CD4-positive, alpha-beta T cell (primary cell): ENCODE measurements at regions of chr7 and their contacts with region 1.

Region 1: GRCh38 chr7:97117372-97118188 is at the start of gene SDHAF3:
- DNase-seq: peak; percentile 96 to 99 (median 98)
- ATAC-seq: peak; percentile 93
- H3K4me3 ChIP-seq: peak within 1 kb of the TSS; percentile 82
- H3K4me3 Mint-ChIP-seq: peak within 1 kb of the TSS; percentile 97
- H3K27ac ChIP-seq: peak within 1 kb of the TSS; percentile 57 to 71
- H3K27ac Mint-ChIP-seq: peak within 1 kb of the TSS; percentile 89
- H3K4me1 ChIP-seq: peaks cover 10% of the 10 kb centered on the region
- H3K4me1 Mint-ChIP-seq: peaks cover 57% of the 10 kb centered on the region
- H3K27me3 ChIP-seq: no peaks in the 10 kb centered on the region
- H3K27me3 Mint-ChIP-seq: no peaks in the 10 kb centered on the region
- CTCF ChIP-seq: no peak
- total RNA-seq, gene SDHAF3: 3.2 to 5.0 TPM

Region 2: GRCh38 chr7:96709381-96710228 is 408.0 kb before region 1 on chr7 and contains the start of gene SEM1:
- CTCF ChIA-PET with region 1: no interaction called
- POLR2A ChIA-PET with region 1: no interaction called
- intact Hi-C with region 1: loop called in 1 of 2 experiments (anchors 10 kb)
- DNase-seq: peak; percentile 36 to 82 (median 54)
- ATAC-seq: peak; percentile 75
- H3K4me3 ChIP-seq: peak within 1 kb of the TSS; percentile 97
- H3K4me3 Mint-ChIP-seq: peak within 1 kb of the TSS; percentile 97
- H3K27ac ChIP-seq: peak within 1 kb of the TSS in 1 of 2 donors; percentile 88
- H3K27ac Mint-ChIP-seq: peak within 1 kb of the TSS; percentile 91
- H3K4me1 ChIP-seq: peaks cover 9% of the 10 kb centered on the region
- H3K4me1 Mint-ChIP-seq: peaks cover 49% of the 10 kb centered on the region
- H3K27me3 ChIP-seq: no peaks in the 10 kb centered on the region
- H3K27me3 Mint-ChIP-seq: peaks cover 8% of the 10 kb centered on the region
- CTCF ChIP-seq: no peak
- total RNA-seq, gene SEM1: 17.4 to 18.2 TPM

Region 3: GRCh38 chr7:97078023-97078969 is 39.3 kb before region 1 on chr7:
- CTCF ChIA-PET with region 1: no interaction called
- POLR2A ChIA-PET with region 1: no interaction called
- intact Hi-C with region 1: no loop called
- DNase-seq: no peak
- ATAC-seq: no peak
- H3K4me3 ChIP-seq: no peak overlapping the region
- H3K4me3 Mint-ChIP-seq: no peak overlapping the region
- H3K27ac ChIP-seq: no peak overlapping the region
- H3K27ac Mint-ChIP-seq: no peak overlapping the region
- H3K4me1 ChIP-seq: no peaks in the 10 kb centered on the region
- H3K4me1 Mint-ChIP-seq: no peaks in the 10 kb centered on the region
- H3K27me3 ChIP-seq: peaks cover 13 to 18% of the 10 kb centered on the region in 2 experiments
- H3K27me3 Mint-ChIP-seq: peaks cover 73% of the 10 kb centered on the region
- CTCF ChIP-seq: no peak

Region 4: GRCh38 chr7:97130417-97131139 is 13.0 kb after region 1 on chr7:
- CTCF ChIA-PET with region 1: no interaction called
- POLR2A ChIA-PET with region 1: interaction called, 10 read pairs
- intact Hi-C with region 1: no loop called
- DNase-seq: no peak
- ATAC-seq: no peak
- H3K4me3 ChIP-seq: no peak overlapping the region
- H3K4me3 Mint-ChIP-seq: no peak overlapping the region
- H3K27ac ChIP-seq: no peak overlapping the region
- H3K27ac Mint-ChIP-seq: no peak overlapping the region
- H3K4me1 ChIP-seq: peaks cover 15% of the 10 kb centered on the region
- H3K4me1 Mint-ChIP-seq: peaks cover 34% of the 10 kb centered on the region
- H3K27me3 ChIP-seq: no peaks in the 10 kb centered on the region
- H3K27me3 Mint-ChIP-seq: no peaks in the 10 kb centered on the region
- CTCF ChIP-seq: no peak

Region 5: DNA sequence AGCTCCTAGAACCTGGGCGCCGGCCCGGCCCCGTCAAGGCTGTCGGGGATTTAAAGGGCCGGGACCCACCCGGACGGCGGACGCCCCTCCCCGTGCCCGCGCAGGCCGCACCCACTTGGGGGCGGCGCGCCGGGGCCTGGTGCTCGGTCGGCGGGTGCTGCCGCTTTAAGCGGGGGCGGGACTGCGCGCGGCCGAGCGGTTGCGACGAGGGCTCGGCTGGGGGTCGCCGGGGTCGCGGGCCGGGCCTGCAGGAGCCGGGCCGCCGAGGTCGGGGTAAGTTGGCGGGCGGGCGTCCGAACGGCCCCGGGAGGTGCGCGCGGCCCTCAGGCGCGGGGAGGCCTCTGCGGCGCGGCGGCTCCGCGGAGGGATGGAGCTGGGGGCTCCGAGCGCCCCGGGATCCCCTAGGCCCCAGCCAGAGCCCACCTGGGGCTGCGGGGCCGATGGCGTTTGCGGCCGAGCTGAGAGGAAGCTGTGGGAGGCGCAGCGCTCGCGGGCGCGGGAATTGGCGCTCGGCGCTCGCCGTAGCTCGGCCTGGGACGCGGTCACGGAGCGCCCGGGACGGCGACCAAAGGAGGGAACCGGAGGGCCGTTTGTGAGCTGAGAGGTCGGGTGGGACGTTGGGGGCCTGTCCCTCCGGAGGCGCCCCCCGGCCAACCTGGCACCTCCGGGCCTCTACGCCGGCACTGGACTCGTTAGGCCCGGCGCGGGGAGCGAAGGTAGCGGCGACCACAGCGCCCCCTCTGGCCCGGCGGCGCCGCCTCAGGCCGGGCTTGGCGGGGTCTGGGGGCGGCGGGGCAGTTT is 1761.0 kb after region 1 on chr7 and contains the start of gene TRRAP:
- CTCF ChIA-PET with region 1: no interaction called
- POLR2A ChIA-PET with region 1: no interaction called
- intact Hi-C with region 1: loop called in 1 of 2 experiments (anchors 5 kb)
- DNase-seq: peak; percentile 60 to 88 (median 70)
- ATAC-seq: peak; percentile 56
- H3K4me3 ChIP-seq: peak within 1 kb of the TSS; percentile 97
- H3K4me3 Mint-ChIP-seq: peak within 1 kb of the TSS; percentile 97
- H3K27ac ChIP-seq: peak within 1 kb of the TSS; percentile 87 to 91
- H3K27ac Mint-ChIP-seq: peak within 1 kb of the TSS; percentile 97
- H3K4me1 ChIP-seq: peaks cover 27% of the 10 kb centered on the region
- H3K4me1 Mint-ChIP-seq: peaks cover 31% of the 10 kb centered on the region
- H3K27me3 ChIP-seq: no peaks in the 10 kb centered on the region
- H3K27me3 Mint-ChIP-seq: no peaks in the 10 kb centered on the region
- CTCF ChIP-seq: peak; percentile 89
- total RNA-seq, gene TRRAP: 47.9 to 48.3 TPM